Heart right ventricle (tissue), 16 donors: ENCODE measurements at regions of chr5 and their contacts with region 1.

Region 1: GRCh38 chr5:136053336-136054141 is 24.8 kb downstream of the TGFBI start:
- DNase-seq: no peak
- ATAC-seq: peak in 5 of 8 donors; percentile 3 to 57 (median 21)
- H3K4me3 ChIP-seq: no peak overlapping the region
- H3K27ac ChIP-seq: peak overlapping the region in 8 of 10 donors; percentile 28 to 61 (median 50)
- H3K4me1 ChIP-seq: peaks cover 0 to 38% (median 29%) of the 10 kb centered on the region in 9 donors
- H3K27me3 ChIP-seq: no peaks in the 10 kb centered on the region
- CTCF ChIP-seq: no peak

Region 2: DNA sequence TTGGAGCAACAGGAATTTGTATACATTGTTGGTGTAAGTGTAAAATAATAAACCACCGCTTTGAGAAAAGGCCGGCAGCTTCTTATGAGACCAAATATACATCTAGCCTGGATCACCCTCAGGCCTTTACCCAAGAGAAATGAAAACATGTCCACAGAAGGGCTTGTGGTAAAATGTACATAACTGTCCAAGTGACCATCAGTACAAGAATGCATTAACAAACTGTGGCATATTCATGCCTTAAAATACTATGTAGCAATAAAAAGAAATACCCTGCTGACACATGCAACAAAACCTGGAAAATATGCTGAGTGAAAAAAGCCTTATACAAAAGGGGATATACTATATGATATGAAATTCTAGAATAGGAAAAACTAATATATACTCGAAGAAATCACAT is 623.7 kb after region 1 on chr5:
- intact Hi-C with region 1: no loop called
- DNase-seq: no peak
- ATAC-seq: no peak
- H3K4me3 ChIP-seq: no peak overlapping the region
- H3K27ac ChIP-seq: no peak overlapping the region
- H3K4me1 ChIP-seq: peaks cover 0 to 10% (median 0%) of the 10 kb centered on the region in 9 donors
- H3K27me3 ChIP-seq: peaks cover 0 to 25% (median 5%) of the 10 kb centered on the region in 7 donors
- CTCF ChIP-seq: no peak

Region 3: GRCh38 chr5:137336565-137337120 is 1283.1 kb after region 1 on chr5:
- intact Hi-C with region 1: loop called in 1 of 10 experiments (anchors 5 kb)
- DNase-seq: no peak
- ATAC-seq: no peak
- H3K4me3 ChIP-seq: no peak overlapping the region
- H3K27ac ChIP-seq: no peak overlapping the region
- H3K4me1 ChIP-seq: peaks cover 0 to 25% (median 0%) of the 10 kb centered on the region in 9 donors
- H3K27me3 ChIP-seq: no peaks in the 10 kb centered on the region
- CTCF ChIP-seq: no peak